Heart right ventricle (tissue), 16 donors: ENCODE measurements at regions of chr15 and their contacts with region 1.

Region 1: GRCh38 chr15:91852741-91853510 is 582 bp upstream of the SLCO3A1 start:
- DNase-seq: peak; percentile 83
- ATAC-seq: peak; percentile 80 to 91 (median 86)
- H3K4me3 ChIP-seq: peak overlapping the region; percentile 69 to 89 (median 82)
- H3K27ac ChIP-seq: peak overlapping the region; percentile 93 to 99 (median 97)
- H3K4me1 ChIP-seq: peaks cover 3 to 64% (median 53%) of the 10 kb centered on the region in 9 donors
- H3K27me3 ChIP-seq: no peaks in the 10 kb centered on the region
- CTCF ChIP-seq: peak; percentile 53 to 91 (median 71)

Region 2: GRCh38 chr15:91311986-91312385 is 540.9 kb before region 1 on chr15:
- intact Hi-C with region 1: loop called in 5 of 10 experiments (anchors 5 to 10 kb)
- DNase-seq: no peak
- ATAC-seq: no peak
- H3K4me3 ChIP-seq: no peak overlapping the region
- H3K27ac ChIP-seq: peak overlapping the region in 1 of 10 donors; percentile 5
- H3K4me1 ChIP-seq: peaks cover 0 to 22% (median 0%) of the 10 kb centered on the region in 9 donors
- H3K27me3 ChIP-seq: peaks cover 0 to 13% (median 0%) of the 10 kb centered on the region in 7 donors
- CTCF ChIP-seq: no peak

Region 3: DNA sequence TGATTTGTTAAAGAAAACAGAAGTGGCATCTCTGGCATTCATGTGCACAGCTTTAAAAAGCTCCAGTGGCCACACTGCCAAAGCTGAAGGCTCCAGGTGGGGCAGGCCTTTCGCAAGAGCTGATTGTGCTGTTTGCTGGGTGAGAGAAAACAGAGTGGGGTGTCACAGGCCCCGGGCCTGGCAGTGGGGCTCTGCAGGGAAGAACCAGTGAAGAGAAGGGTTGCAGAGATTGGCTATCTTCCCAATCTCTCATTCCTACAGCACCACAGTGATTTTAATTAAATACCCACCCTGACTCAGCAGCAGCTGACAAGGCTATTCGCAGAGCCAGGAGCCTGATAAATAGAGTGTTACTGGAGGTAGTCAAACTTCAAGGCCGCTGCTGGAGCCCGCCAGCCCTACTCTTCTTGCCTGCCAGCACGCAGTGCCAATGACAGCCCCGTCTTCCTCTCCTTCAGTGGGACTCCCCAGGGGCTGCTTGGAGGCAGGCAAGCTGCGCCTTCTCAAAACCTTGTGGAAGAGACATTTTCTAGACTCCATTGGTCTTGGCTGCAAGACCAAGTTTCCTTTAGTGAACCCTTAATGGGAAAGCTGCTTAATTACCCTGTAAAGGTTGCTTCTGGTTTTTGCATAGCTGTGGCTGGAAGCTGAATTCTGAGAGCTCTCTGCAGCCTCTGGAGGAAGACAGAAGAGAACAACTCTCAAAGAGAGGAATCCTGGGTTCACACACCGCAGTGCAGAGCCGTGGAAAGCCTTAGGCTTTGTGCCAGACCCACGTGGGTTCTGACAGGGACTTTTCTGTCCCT is 225.2 kb before region 1 on chr15:
- intact Hi-C with region 1: loop called in 1 of 10 experiments (anchors 1 kb)
- DNase-seq: peak; percentile 61 to 63
- ATAC-seq: peak; percentile 83 to 95 (median 92)
- H3K4me3 ChIP-seq: no peak overlapping the region
- H3K27ac ChIP-seq: peak overlapping the region; percentile 7 to 85 (median 66)
- H3K4me1 ChIP-seq: peaks cover 4 to 21% (median 9%) of the 10 kb centered on the region in 9 donors
- H3K27me3 ChIP-seq: no peaks in the 10 kb centered on the region
- CTCF ChIP-seq: no peak

Region 4: GRCh38 chr15:91926908-91927270 is 74.0 kb after region 1 on chr15:
- intact Hi-C with region 1: loop called in 5 of 10 experiments (anchors 5 to 10 kb)
- DNase-seq: no peak
- ATAC-seq: peak; percentile 29 to 52 (median 50)
- H3K4me3 ChIP-seq: no peak overlapping the region
- H3K27ac ChIP-seq: peak overlapping the region in 8 of 10 donors; percentile 17 to 69 (median 40)
- H3K4me1 ChIP-seq: peaks cover 17 to 90% (median 79%) of the 10 kb centered on the region in 9 donors
- H3K27me3 ChIP-seq: no peaks in the 10 kb centered on the region
- CTCF ChIP-seq: no peak

Region 5: DNA sequence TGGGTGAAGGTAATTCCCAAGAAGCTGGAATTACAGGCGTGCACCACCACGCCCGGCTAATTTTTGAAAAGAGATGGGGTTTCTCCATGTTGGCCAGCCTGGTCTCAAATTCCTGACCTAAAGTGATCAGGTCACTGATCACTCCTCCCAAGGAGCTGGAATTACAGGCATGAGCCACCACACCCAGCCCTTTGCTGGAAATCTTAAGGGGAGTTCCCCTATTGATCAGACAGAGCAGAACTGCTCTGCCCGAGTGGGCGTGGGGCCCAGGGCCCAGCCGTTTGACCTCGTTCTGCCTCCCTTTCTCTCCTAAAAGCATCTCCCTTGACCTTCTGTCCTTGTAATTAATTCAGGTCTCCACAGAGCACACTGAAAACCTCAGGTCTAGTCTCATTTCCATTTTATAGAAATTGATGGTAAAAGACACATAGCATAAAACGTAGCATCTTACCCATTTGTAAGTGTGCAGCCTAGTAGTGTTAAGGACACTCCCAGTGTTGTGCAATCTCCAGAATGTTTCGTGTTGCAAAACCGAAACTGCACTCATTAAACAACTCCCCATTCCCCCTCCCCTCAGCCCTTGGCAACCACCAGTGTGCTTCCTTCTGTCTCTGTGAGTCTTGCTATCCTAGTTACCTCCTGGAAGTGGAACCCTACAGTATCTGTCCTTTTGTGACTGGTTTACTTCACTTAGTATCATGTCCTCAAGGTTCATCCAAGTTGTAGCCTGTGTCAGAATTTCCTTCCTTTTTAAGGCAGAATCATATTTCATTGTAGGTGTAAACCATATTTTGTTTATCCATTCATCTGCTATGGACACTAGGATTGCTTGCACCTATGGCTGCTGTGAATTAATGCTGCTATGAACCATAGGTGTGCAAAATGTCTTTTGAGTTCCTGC is 90.0 kb after region 1 on chr15:
- intact Hi-C with region 1: loop called in 7 of 10 experiments (anchors 5 to 10 kb)
- DNase-seq: peak; percentile 63 to 88
- ATAC-seq: peak; percentile 75 to 92 (median 86)
- H3K4me3 ChIP-seq: peak overlapping the region in 7 of 10 donors; percentile 6 to 35 (median 17)
- H3K27ac ChIP-seq: peak overlapping the region in 9 of 10 donors; percentile 29 to 82 (median 68)
- H3K4me1 ChIP-seq: peaks cover 37 to 98% (median 93%) of the 10 kb centered on the region in 9 donors
- H3K27me3 ChIP-seq: no peaks in the 10 kb centered on the region
- CTCF ChIP-seq: no peak

Region 6: DNA sequence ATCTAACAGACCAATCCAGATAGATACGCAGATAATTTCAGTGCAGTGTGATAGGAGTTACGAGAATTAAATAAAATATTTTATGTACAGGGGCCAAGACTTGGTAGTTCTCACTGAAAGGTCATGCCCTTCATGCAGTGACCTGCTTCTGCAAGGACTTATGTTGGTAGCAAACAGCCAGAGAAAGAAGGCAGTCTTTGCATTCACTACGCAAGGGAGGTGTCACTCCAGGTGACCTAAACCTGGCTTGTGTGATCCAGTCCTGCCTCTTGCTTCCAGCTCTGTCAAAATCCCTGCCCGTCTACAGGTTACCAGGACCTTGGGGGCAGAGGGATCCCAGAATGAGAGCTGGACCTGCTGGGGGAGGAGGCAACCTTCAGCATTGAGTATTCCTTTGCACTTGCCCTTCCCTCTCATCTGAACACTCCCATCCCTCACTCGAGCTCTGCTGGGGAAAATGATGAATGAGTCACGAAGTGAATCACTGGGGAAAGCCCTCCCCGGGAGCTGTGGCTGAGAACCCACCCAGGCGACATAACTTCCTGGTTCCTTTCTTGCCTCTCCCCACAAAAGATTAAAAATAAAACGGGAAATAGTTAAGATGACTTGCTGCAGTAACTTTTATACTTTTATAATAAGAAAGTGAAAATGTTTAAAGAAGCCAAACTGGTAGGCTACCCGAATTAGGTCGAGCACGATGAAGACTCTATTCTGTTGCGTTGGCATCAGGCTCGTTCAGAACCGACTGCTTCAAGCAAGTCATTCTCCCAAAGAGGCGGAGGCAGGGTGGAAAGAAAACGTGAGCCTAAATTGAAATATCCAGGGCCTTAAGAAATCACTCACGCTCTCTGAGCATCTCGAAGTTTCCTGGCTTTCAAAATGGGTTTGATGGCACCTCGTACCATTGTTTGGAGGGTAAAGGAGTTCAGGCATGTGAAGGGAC is 216.7 kb after region 1 on chr15:
- intact Hi-C with region 1: loop called in 1 of 10 experiments (anchors 2 kb)
- DNase-seq: peak in 1 of 2 donors; percentile 68
- ATAC-seq: peak; percentile 65 to 92 (median 82)
- H3K4me3 ChIP-seq: peak overlapping the region in 8 of 10 donors; percentile 9 to 39 (median 30)
- H3K27ac ChIP-seq: peak overlapping the region in 9 of 10 donors; percentile 29 to 81 (median 72)
- H3K4me1 ChIP-seq: peaks cover 8 to 70% (median 66%) of the 10 kb centered on the region in 9 donors
- H3K27me3 ChIP-seq: no peaks in the 10 kb centered on the region
- CTCF ChIP-seq: no peak